ENCODE measurements at regions of chr6 and their contacts with region 1.

Region 1: GRCh38 chr6:112906726-112907125 is 559.6 kb downstream of the RFPL4B start:
- DNase-seq: peak in 4 of 5 donors; percentile 27 to 51 (median 40)
- ATAC-seq: peak; percentile 81 to 94 (median 87)
- H3K4me3 ChIP-seq: no peak overlapping the region
- H3K27ac ChIP-seq: peak overlapping the region in 5 of 12 donors; percentile 15 to 41 (median 24)
- H3K4me1 ChIP-seq: peaks cover 0 to 10% (median 0%) of the 10 kb centered on the region in 12 donors
- H3K27me3 ChIP-seq: no peaks in the 10 kb centered on the region
- CTCF ChIP-seq: no peak
- POLR2A ChIP-seq: no peak

Region 2: DNA sequence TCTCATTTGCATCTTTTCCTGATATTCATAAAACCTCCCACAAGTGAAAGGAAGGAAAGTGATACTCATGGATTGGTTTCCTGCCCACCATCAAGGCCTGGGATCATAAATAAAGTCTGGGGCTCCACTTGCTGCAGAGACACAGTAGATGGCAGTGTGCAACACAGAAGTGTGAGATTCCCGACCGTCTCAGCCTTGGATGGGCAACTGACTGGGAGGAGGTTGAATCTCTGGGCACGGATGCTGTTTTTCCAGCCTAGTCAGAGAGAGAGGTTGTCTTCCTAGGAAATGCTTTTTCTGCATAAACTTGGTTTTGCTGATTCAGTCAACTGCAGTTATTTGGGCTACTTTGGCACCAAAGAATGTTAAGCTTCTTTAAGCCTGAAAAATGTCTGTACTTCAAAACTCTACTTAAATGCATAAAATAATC is 569.5 kb before region 1 on chr6:
- intact Hi-C with region 1: loop called in 1 of 10 experiments (anchors 10 kb)
- DNase-seq: peak in 4 of 5 donors; percentile 50 to 62 (median 55)
- ATAC-seq: peak; percentile 78 to 94 (median 92)
- H3K4me3 ChIP-seq: no peak overlapping the region
- H3K27ac ChIP-seq: no peak overlapping the region
- H3K4me1 ChIP-seq: no peaks in the 10 kb centered on the region
- H3K27me3 ChIP-seq: peaks cover 0 to 4% (median 0%) of the 10 kb centered on the region in 9 donors
- CTCF ChIP-seq: peak; percentile 36 to 77 (median 62)
- POLR2A ChIP-seq: no peak

Region 3: DNA sequence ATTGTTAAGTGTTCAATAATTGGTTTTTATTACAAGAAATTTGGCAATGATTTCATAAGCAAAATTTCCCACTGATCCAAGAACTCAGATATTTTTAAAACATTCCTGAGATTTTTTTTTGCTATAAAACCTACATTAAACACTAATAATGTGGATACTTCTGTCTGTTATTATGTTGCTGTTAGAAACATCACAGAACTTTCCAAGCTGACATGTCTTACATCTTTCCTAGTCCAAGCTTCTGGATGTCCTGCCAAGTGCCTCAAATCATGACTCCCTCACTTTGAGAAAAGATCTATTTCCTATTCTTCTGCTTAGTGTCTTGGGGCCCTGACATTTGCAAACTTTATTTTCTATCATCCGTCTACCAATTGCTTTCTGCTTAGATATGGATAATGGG is 448.8 kb before region 1 on chr6:
- intact Hi-C with region 1: no loop called
- DNase-seq: no peak
- ATAC-seq: no peak
- H3K4me3 ChIP-seq: no peak overlapping the region
- H3K27ac ChIP-seq: no peak overlapping the region
- H3K4me1 ChIP-seq: no peaks in the 10 kb centered on the region
- H3K27me3 ChIP-seq: no peaks in the 10 kb centered on the region
- CTCF ChIP-seq: no peak
- POLR2A ChIP-seq: no peak